ENCODE measurements at regions of chr14 and their contacts with region 1.

Region 1: GRCh38 chr14:70821584-70822529 is 12.5 kb upstream of the MAP3K9 start:
- DNase-seq: peak; percentile 60
- ATAC-seq: peak; percentile 28
- H3K4me3 Mint-ChIP-seq: peak overlapping the region; percentile 82
- H3K27ac Mint-ChIP-seq: no peak overlapping the region
- H3K4me1 Mint-ChIP-seq: peaks cover 20% of the 10 kb centered on the region
- H3K27me3 Mint-ChIP-seq: peaks cover 48% of the 10 kb centered on the region
- CTCF ChIP-seq: no peak

Region 2: DNA sequence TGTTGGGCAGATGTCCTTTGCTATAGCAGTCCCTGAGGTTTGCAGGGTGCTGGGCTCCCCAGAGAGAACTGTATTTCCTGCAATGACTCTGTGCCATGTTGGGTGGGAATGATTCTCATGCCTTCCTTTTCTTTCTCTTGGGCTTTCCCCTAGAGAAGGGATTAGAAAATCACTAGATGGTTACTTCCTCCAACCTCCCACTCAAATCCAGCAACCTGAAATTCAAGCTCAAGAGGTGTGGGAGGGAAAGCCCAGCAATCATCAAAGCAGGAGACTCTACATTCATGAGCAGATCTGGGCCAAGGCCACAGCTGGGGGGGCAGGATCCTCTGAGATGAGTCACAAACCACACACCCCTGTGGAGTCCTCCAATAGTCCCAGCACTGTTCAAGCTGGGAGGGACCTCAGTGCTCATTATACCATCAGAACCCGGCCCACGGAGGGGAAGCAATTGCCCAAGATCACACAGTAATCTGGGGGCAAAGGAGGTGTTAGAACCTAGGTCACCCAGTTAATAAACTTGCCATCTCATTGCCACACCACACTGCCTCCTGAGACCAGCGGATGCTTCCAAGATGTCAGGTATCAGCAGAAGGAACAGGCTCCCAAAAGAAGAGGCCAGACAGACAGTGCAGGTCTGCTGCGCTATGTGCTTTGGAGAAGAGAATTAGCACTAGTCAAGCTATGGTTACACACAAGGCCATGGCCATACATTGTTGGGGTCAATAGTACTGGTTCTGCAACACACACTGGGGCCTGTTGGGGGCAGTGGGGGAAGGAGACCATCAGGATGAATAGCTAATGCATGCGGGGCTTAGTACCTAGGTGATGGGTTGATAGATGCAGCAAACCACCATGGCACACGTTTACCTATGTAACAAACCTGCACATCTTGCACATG is 114.5 kb before region 1 on chr14:
- CTCF ChIA-PET with region 1: interaction called, 23 read pairs
- POLR2A ChIA-PET with region 1: interaction called, 3 read pairs
- DNase-seq: peak; percentile 33
- ATAC-seq: peak; percentile 36
- H3K4me3 Mint-ChIP-seq: no peak overlapping the region
- H3K27ac Mint-ChIP-seq: peak overlapping the region; percentile 47
- H3K4me1 Mint-ChIP-seq: peaks cover 56% of the 10 kb centered on the region
- H3K27me3 Mint-ChIP-seq: no peaks in the 10 kb centered on the region
- CTCF ChIP-seq: no peak

Region 3: DNA sequence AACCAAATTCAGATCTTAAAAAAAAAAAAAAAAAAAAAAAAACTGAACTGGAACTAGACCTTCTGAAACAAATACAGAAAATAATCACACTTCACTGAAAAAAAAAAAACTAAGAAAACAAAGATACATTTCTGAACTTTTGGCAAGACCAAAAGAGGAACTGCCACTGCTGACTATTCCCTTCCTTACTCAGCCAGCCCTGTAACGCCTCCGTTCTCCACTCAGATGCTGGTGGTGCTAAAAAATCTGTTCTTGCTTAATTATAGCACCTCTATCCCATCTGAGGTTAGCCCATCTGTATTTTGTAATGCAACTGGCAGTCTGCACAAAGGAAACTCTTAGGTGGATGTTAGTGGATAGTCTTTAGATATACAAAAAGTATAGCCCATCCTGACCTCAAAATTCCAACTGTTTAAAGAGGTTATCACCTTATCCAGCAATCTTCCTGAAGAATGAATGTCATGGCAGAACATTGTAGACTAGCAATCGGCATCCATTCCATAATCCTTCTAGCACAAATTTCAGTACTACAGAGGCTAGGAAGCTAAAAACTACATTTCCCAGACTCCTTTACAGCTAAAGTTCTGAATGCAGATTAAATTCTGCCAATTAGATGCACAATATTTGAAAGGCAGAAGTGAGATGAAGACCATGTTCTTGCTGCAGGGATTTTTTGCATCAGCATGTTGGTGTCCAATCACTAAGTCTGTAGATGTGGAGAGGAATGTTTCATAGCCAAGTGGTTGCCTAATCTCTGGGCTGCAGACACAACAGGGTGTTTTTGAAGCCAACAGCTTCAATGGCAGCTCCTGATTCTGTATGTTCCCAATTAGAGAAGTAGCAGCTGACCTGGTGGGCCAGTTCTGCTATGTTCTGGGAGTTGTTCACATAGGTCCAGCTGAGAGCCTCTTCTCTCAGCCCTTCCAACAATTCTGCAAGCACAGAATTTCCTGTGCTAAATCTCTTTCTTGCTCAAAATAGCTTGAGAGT is 18.2 kb before region 1 on chr14:
- CTCF ChIA-PET with region 1: interaction called, 85 read pairs
- POLR2A ChIA-PET with region 1: interaction called, 25 read pairs
- DNase-seq: no peak
- ATAC-seq: no peak
- H3K4me3 Mint-ChIP-seq: no peak overlapping the region
- H3K27ac Mint-ChIP-seq: no peak overlapping the region
- H3K4me1 Mint-ChIP-seq: peaks cover 30% of the 10 kb centered on the region
- H3K27me3 Mint-ChIP-seq: no peaks in the 10 kb centered on the region
- CTCF ChIP-seq: no peak

Region 4: GRCh38 chr14:70809543-70810244 is 12.2 kb before region 1 on chr14:
- CTCF ChIA-PET with region 1: interaction called, 85 read pairs
- POLR2A ChIA-PET with region 1: interaction called, 25 read pairs
- DNase-seq: peak; percentile 100
- ATAC-seq: peak; percentile 94
- H3K4me3 Mint-ChIP-seq: no peak overlapping the region
- H3K27ac Mint-ChIP-seq: peak overlapping the region; percentile 96
- H3K4me1 Mint-ChIP-seq: peaks cover 15% of the 10 kb centered on the region
- H3K27me3 Mint-ChIP-seq: no peaks in the 10 kb centered on the region
- CTCF ChIP-seq: no peak

Region 5: GRCh38 chr14:70842851-70843462 is 21.1 kb after region 1 on chr14:
- CTCF ChIA-PET with region 1: interaction called, 10 read pairs
- POLR2A ChIA-PET with region 1: interaction called, 3 read pairs
- DNase-seq: no peak
- ATAC-seq: no peak
- H3K4me3 Mint-ChIP-seq: no peak overlapping the region
- H3K27ac Mint-ChIP-seq: no peak overlapping the region
- H3K4me1 Mint-ChIP-seq: no peaks in the 10 kb centered on the region
- H3K27me3 Mint-ChIP-seq: no peaks in the 10 kb centered on the region; the same call in 1 of the 2 replicates
- CTCF ChIP-seq: no peak

Region 6: GRCh38 chr14:70907176-70907995 is 85.5 kb after region 1 on chr14 and contains the start of gene PCNX1:
- CTCF ChIA-PET with region 1: interaction called, 17 read pairs
- POLR2A ChIA-PET with region 1: interaction called, 3 read pairs
- DNase-seq: peak; percentile 91
- ATAC-seq: peak; percentile 95
- H3K4me3 Mint-ChIP-seq: peak within 1 kb of the TSS; percentile 71
- H3K27ac Mint-ChIP-seq: peak within 1 kb of the TSS; percentile 82
- H3K4me1 Mint-ChIP-seq: peaks cover 43% of the 10 kb centered on the region
- H3K27me3 Mint-ChIP-seq: no peaks in the 10 kb centered on the region; the same call in 1 of the 2 replicates
- CTCF ChIP-seq: peak; percentile 50
- total RNA-seq, gene PCNX1: 43.4 to 49.8 TPM (median 46.4 TPM) in 3 replicates

Region 7: DNA sequence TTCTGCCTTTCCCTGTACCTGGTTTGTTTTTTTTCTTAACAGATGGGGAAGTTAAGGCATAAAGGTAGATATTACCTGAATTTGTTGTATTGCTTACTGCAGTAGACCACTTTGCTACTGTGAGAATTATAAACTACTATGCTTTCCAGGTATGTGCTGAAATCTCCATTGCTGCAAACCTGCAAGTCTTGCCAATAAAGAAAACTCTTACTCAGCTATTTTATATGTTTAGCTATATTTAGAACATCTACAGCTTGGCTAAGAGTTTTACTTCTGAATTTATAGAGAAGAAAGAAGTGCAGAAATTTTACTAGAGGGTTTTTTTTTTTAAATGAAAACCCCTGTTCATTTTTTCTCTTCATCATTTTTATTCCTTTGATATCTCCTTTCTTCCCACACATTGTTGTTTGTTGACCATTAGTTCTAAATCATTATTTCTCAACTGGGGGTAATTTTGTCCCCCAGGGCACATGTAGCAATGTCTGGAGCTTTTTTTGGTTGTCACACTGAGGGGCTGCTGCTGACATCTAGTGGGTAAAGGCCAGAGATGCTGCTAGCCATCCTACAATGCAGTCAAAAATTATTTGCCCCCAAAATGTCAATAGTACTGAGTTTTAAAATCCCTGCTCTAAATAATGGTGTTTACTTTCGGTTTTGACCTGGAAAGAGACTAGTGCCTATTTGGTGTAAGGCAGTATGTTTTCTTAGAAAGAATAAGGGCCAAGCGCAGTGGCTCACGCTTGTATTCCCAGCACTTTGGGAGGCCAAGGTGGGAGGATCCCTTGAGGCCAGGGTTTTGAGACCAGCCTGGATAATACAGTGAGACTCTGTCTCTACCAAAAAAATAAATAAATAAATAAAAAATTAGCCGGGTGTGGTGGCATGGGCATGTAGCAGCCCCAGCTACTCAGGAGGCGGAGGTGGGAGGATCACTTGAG is 134.0 kb after region 1 on chr14:
- CTCF ChIA-PET with region 1: interaction called, 10 read pairs
- POLR2A ChIA-PET with region 1: no interaction called
- DNase-seq: no peak
- ATAC-seq: peak; percentile 51; the same call in 1 of the 2 replicates
- H3K4me3 Mint-ChIP-seq: no peak overlapping the region
- H3K27ac Mint-ChIP-seq: no peak overlapping the region
- H3K4me1 Mint-ChIP-seq: no peaks in the 10 kb centered on the region
- H3K27me3 Mint-ChIP-seq: no peaks in the 10 kb centered on the region
- CTCF ChIP-seq: no peak

Measured in WTC11 (cell line).